Colonic mucosa (tissue), 4 donors: ENCODE measurements at regions of chr6 and their contacts with region 1.

Region 1: GRCh38 chr6:101114703-101115102 is 233.6 kb upstream of the ASCC3 start:
- DNase-seq: peak; percentile 19
- H3K4me3 ChIP-seq: no peak overlapping the region
- H3K27ac ChIP-seq: no peak overlapping the region
- H3K4me1 ChIP-seq: no peaks in the 10 kb centered on the region
- H3K27me3 ChIP-seq: no peaks in the 10 kb centered on the region
- CTCF ChIP-seq: peak; percentile 47

Region 2: GRCh38 chr6:101226626-101227165 is 112.0 kb after region 1 on chr6:
- intact Hi-C with region 1: loop called (anchors 10 kb)
- DNase-seq: no peak
- H3K4me3 ChIP-seq: no peak overlapping the region
- H3K27ac ChIP-seq: no peak overlapping the region
- H3K4me1 ChIP-seq: no peaks in the 10 kb centered on the region
- H3K27me3 ChIP-seq: no peaks in the 10 kb centered on the region
- CTCF ChIP-seq: no peak